Kidney (tissue), 22 donors: ENCODE measurements at regions of chr14 and their contacts with region 1.

Region 1: GRCh38 chr14:75088574-75089373 is 19.3 kb downstream of the ZC2HC1C start:
- DNase-seq: peak in 3 of 5 donors; percentile 59 to 88 (median 76)
- H3K4me3 ChIP-seq: no peak overlapping the region
- H3K27ac ChIP-seq: no peak overlapping the region
- H3K4me1 ChIP-seq: no peaks in the 10 kb centered on the region
- H3K27me3 ChIP-seq: no peaks in the 10 kb centered on the region
- CTCF ChIP-seq: peak; percentile 85

Region 2: GRCh38 chr14:74524076-74524811 is 564.5 kb before region 1 on chr14:
- intact Hi-C with region 1: no loop called
- DNase-seq: no peak
- H3K4me3 ChIP-seq: no peak overlapping the region
- H3K27ac ChIP-seq: no peak overlapping the region
- H3K4me1 ChIP-seq: no peaks in the 10 kb centered on the region
- H3K27me3 ChIP-seq: no peaks in the 10 kb centered on the region
- CTCF ChIP-seq: no peak

Region 3: DNA sequence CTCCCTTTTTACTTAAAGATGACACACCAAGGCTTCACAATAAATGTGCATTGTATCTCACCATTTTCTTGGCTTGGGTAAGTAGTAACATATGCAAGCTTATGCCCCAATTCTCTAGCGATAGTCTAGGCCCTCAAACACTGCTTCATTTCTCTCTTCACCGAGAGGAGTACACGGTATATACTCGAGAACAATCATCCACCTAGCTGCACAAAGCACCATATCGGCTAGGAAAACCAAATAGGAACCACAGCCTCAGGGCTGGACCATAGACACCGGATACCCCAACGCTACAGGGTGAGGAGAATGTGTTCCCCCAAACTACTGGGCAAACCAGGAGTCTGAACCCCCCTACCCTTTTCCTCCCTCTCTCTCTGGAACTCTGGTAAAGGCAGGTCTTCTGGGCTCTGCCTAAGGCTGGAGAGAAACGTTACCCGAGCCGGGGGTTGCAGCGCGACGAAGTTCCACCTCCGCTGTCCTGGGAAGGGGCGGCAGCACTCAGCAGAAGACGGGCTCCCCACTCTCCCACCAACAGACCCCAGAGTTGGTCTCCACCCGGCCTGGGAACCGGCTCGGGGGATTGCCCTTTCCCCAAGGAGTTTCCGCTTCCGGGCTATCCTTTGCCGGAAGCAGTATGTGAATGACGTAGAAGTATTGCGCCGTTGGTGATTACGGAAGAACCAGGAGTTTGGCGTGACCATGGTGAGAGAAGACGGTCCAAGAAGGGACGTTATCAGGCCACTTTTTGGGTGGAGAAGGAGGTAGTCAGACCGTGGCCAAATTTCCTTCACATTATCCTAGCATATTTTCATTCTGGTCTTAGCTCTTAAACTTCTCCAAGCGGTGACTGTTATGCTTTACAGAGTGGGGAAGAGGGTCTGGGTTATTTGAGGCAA is 376.0 kb before region 1 on chr14 and contains the starts of genes AREL1 and FCF1:
- intact Hi-C with region 1: no loop called
- DNase-seq: peak; percentile 87 to 98 (median 90)
- H3K4me3 ChIP-seq: peak within 1 kb of the TSS; percentile 95 to 100 (median 95)
- H3K27ac ChIP-seq: peak within 1 kb of the TSS; percentile 65 to 69
- H3K4me1 ChIP-seq: peaks cover 0 to 6% (median 4%) of the 10 kb centered on the region in 3 donors
- H3K27me3 ChIP-seq: no peaks in the 10 kb centered on the region
- CTCF ChIP-seq: no peak
- total RNA-seq, gene AREL1: 42.3 TPM
- total RNA-seq, gene FCF1: 49.6 TPM

Region 4: GRCh38 chr14:74932401-74932901 is 156.3 kb before region 1 on chr14:
- intact Hi-C with region 1: no loop called
- DNase-seq: peak in 2 of 5 donors; percentile 27 to 37
- H3K4me3 ChIP-seq: no peak overlapping the region
- H3K27ac ChIP-seq: no peak overlapping the region
- H3K4me1 ChIP-seq: no peaks in the 10 kb centered on the region
- H3K27me3 ChIP-seq: no peaks in the 10 kb centered on the region
- CTCF ChIP-seq: no peak

Region 5: GRCh38 chr14:74945823-74946682 is 142.7 kb before region 1 on chr14:
- intact Hi-C with region 1: loop called (anchors 10 kb)
- DNase-seq: peak in 4 of 5 donors; percentile 84 to 91 (median 86)
- H3K4me3 ChIP-seq: no peak overlapping the region
- H3K27ac ChIP-seq: no peak overlapping the region
- H3K4me1 ChIP-seq: peaks cover 0 to 18% (median 0%) of the 10 kb centered on the region in 3 donors
- H3K27me3 ChIP-seq: no peaks in the 10 kb centered on the region
- CTCF ChIP-seq: peak; percentile 96